Adrenal gland (tissue), 19 donors: ENCODE measurements at regions of chr10 and their contacts with region 1.

Region 1: DNA sequence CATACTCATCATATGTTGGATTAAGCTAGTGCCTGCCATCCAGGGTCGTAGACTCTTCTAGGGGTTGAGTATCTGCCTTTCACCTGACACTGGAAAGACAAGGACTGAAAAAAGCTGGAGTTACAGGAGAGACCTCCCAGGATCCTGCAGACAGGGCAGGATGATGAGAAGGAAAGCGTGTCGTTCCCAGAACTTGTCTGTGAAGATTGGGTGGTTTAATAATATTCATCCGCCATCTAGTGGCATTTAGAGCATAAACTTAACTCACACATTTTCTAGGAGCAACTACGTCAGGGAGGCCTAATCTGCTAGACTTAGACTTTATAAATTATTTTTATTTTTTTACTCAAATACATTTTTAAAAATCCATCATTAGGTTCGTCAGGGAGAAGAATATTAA is 59.6 kb downstream of the ADRB1 start:
- DNase-seq: peak in 1 of 7 donors; percentile 16
- H3K4me3 ChIP-seq: no peak overlapping the region
- H3K27ac ChIP-seq: no peak overlapping the region
- H3K4me1 ChIP-seq: peaks cover 7 to 11% of the 10 kb centered on the region in 2 donors
- H3K27me3 ChIP-seq: peaks cover 6% of the 10 kb centered on the region
- CTCF ChIP-seq: peak; percentile 48 to 77 (median 65)
- POLR2A ChIP-seq: no peak

Region 2: DNA sequence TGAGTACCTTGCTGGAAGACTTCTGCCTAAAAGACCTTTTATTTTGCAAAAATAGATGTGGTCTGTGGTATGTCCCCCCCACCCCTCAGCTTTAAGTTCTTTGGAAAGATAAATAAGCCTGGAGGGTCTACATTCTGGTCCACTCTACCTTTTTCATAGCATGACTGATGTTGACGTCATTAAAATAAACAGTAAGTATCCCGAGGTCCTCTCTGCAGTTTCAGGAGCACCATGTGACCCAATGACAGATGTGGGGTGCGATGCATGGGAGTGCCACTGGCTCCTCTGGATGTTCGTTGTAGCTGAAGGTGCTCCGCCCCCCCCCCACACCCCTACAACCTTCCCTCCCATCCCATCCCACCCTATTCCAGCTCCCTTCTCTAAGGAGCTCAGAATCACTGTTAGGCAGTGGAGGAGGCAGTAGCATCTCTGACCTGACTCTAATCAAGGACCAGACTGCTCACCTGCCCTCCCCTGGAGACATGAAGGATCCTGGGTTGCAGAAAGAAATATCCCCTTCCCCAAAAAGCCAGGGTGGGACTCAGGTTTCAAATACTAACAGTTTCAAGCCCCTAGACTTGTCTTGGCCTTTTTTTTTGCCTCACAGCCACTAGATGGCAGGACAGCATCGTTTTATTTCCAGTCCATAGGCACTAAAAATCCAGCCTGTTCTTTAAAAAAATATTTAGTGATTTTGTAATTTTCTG is 398.5 kb before region 1 on chr10:
- intact Hi-C with region 1: loop called in 1 of 2 experiments (anchors 10 kb)
- DNase-seq: peak in 3 of 7 donors; percentile 11 to 29 (median 19)
- H3K4me3 ChIP-seq: no peak overlapping the region
- H3K27ac ChIP-seq: no peak overlapping the region
- H3K4me1 ChIP-seq: peaks cover 0 to 10% of the 10 kb centered on the region in 2 donors
- H3K27me3 ChIP-seq: no peaks in the 10 kb centered on the region
- CTCF ChIP-seq: peak; percentile 35 to 62 (median 52)
- POLR2A ChIP-seq: no peak

Region 3: GRCh38 chr10:113802997-113803396 is 300.3 kb before region 1 on chr10:
- intact Hi-C with region 1: loop called (anchors 5 kb)
- DNase-seq: no peak
- H3K4me3 ChIP-seq: no peak overlapping the region
- H3K27ac ChIP-seq: no peak overlapping the region
- H3K4me1 ChIP-seq: no peaks in the 10 kb centered on the region
- H3K27me3 ChIP-seq: peaks cover 3% of the 10 kb centered on the region
- CTCF ChIP-seq: no peak
- POLR2A ChIP-seq: no peak

Region 4: GRCh38 chr10:114328874-114329273 is 225.6 kb after region 1 on chr10:
- intact Hi-C with region 1: no loop called
- DNase-seq: peak in 4 of 7 donors; percentile 11 to 58 (median 30)
- H3K4me3 ChIP-seq: no peak overlapping the region
- H3K27ac ChIP-seq: peak overlapping the region in 1 of 5 donors; percentile 52
- H3K4me1 ChIP-seq: no peaks in the 10 kb centered on the region
- H3K27me3 ChIP-seq: no peaks in the 10 kb centered on the region
- CTCF ChIP-seq: no peak
- POLR2A ChIP-seq: no peak

Region 5: GRCh38 chr10:114723991-114724698 is 620.9 kb after region 1 on chr10:
- intact Hi-C with region 1: no loop called
- DNase-seq: no peak
- H3K4me3 ChIP-seq: no peak overlapping the region
- H3K27ac ChIP-seq: no peak overlapping the region
- H3K4me1 ChIP-seq: peaks cover 0 to 6% of the 10 kb centered on the region in 2 donors
- H3K27me3 ChIP-seq: no peaks in the 10 kb centered on the region
- CTCF ChIP-seq: no peak
- POLR2A ChIP-seq: no peak